Gastrocnemius medialis (tissue), 4 donors: ENCODE measurements at regions of chr1 and their contacts with region 1.

Region 1: DNA sequence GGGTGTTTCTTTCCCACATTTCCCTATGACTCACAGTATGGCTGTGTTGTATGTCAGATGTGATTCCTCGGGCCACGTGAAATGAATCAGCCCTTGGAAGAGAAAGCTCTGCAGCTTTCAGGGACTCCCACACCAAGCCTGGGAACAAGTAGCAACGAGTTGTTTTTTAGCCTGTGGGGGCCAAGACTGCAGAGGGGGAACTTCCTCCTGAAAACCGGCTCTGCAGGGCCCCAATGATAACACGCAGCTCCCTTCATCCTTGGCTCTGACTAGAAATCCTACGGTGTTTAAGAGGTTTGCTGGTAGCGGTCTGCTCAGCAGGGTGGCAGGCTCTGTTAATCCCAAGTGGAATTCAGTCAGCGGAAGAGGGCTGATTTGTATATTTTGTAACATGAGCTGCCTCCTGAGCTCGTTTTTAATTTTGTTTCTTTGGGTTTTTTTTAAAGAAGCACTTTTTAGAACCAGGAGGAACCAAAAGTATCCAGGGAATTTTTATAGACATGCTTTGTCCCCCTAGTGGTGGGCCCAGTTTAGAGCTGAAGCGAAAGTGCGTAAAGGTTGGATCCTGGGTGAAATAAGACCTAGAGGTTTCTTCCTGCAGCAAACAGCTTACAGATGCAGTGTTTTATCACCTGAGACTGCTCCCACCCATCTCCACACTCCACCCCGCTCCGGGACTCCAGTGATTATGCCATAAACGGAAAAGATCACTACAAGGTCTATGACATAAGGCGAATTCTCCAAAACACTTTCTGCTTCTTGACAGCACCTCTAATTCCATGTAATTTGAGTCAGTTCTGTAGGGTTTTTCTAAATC is 48.8 kb downstream of the LAMC2 start:
- DNase-seq: peak; percentile 79 to 83
- ATAC-seq: peak; percentile 97 to 98
- H3K4me3 ChIP-seq: peak overlapping the region; percentile 41 to 53 (median 48)
- H3K27ac ChIP-seq: peak overlapping the region; percentile 73 to 83 (median 78)
- H3K4me1 ChIP-seq: peaks cover 12 to 17% of the 10 kb centered on the region in 2 donors
- H3K27me3 ChIP-seq: no peaks in the 10 kb centered on the region
- CTCF ChIP-seq: peak; percentile 59 to 81 (median 69)
- POLR2A ChIP-seq: peak; percentile 10 to 42

Region 2: DNA sequence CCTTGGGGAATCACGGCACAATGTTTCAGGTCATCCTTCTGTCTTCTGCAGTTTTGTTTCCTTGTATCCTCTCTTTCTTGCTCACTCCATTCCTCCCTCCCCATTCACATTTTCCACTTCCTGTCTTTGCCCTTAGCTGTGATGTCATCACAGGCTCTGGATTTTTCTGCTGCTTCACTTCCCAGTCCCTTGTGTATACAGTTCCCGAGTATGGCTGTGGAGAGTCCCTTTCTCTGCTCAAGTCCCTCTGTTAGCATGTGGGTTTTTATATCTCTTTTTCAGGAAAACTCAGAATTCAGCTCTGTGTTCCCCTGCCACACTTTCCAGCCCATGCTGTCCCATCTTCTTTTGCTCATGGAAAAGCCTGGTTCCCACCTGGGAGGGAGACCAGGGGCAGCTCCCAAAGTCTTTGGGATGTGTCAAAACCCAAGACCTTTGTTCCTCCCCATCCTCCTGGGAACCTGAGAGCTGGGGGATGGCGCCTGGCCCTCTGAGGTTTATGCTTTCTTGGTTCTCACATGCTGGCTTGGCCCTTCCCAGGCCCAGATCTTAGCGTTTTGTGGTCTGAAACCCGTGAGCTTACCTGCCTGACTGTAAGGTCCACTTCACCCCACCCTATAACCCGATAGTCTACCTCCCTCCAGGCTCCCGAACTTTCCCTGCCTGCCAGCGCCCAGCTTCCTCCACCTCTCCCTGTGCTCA is 625.8 kb before region 1 on chr1:
- in situ Hi-C with region 1: no loop called
- intact Hi-C with region 1: no loop called
- DNase-seq: no peak
- ATAC-seq: no peak
- H3K4me3 ChIP-seq: no peak overlapping the region
- H3K27ac ChIP-seq: peak overlapping the region in 3 of 4 donors; percentile 1 to 35 (median 17)
- H3K4me1 ChIP-seq: peaks cover 21% of the 10 kb centered on the region in 2 donors
- H3K27me3 ChIP-seq: no peaks in the 10 kb centered on the region
- CTCF ChIP-seq: no peak
- POLR2A ChIP-seq: no peak

Region 3: DNA sequence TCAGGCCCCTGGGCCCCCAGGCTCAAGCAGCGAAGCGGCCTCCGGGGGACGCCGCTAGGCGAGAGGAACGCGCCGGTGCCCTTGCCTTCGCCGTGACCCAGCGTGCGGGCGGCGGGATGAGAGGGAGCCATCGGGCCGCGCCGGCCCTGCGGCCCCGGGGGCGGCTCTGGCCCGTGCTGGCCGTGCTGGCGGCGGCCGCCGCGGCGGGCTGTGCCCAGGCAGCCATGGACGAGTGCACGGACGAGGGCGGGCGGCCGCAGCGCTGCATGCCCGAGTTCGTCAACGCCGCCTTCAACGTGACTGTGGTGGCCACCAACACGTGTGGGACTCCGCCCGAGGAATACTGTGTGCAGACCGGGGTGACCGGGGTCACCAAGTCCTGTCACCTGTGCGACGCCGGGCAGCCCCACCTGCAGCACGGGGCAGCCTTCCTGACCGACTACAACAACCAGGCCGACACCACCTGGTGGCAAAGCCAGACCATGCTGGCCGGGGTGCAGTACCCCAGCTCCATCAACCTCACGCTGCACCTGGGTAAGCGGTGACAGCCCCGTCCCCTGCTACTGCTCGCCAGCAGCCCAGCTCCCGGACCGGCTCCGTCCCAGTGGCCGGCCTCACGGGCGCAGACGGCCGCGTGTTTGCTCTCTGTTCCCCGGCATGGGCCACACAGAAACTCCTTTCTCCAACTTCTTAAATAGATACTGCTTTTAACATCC is 211.1 kb before region 1 on chr1:
- in situ Hi-C with region 1: no loop called
- intact Hi-C with region 1: loop called (anchors 2 kb)
- DNase-seq: peak; percentile 85
- ATAC-seq: peak; percentile 57 to 61
- H3K4me3 ChIP-seq: peak overlapping the region; percentile 76 to 91 (median 85)
- H3K27ac ChIP-seq: peak overlapping the region; percentile 94 to 100 (median 98)
- H3K4me1 ChIP-seq: peaks cover 48 to 64% of the 10 kb centered on the region in 2 donors
- H3K27me3 ChIP-seq: no peaks in the 10 kb centered on the region
- CTCF ChIP-seq: peak; percentile 62 to 81 (median 78)
- POLR2A ChIP-seq: peak; percentile 46 to 60

Region 4: GRCh38 chr1:183139281-183139942 is 95.5 kb before region 1 on chr1:
- in situ Hi-C with region 1: loop called in 1 of 4 experiments (anchors 10 kb)
- intact Hi-C with region 1: no loop called
- DNase-seq: no peak
- ATAC-seq: peak; percentile 29 to 31
- H3K4me3 ChIP-seq: no peak overlapping the region
- H3K27ac ChIP-seq: peak overlapping the region; percentile 62 to 76 (median 70)
- H3K4me1 ChIP-seq: peaks cover 11 to 18% of the 10 kb centered on the region in 2 donors
- H3K27me3 ChIP-seq: no peaks in the 10 kb centered on the region
- CTCF ChIP-seq: no peak
- POLR2A ChIP-seq: no peak

Region 5: GRCh38 chr1:183148599-183148998 is 86.3 kb before region 1 on chr1:
- in situ Hi-C with region 1: no loop called
- intact Hi-C with region 1: loop called (anchors 5 kb)
- DNase-seq: no peak
- ATAC-seq: peak; percentile 52 to 71
- H3K4me3 ChIP-seq: no peak overlapping the region
- H3K27ac ChIP-seq: peak overlapping the region; percentile 52 to 64 (median 60)
- H3K4me1 ChIP-seq: peaks cover 11 to 14% of the 10 kb centered on the region in 2 donors
- H3K27me3 ChIP-seq: no peaks in the 10 kb centered on the region
- CTCF ChIP-seq: no peak
- POLR2A ChIP-seq: peak in 1 of 2 donors; percentile 9

Region 6: DNA sequence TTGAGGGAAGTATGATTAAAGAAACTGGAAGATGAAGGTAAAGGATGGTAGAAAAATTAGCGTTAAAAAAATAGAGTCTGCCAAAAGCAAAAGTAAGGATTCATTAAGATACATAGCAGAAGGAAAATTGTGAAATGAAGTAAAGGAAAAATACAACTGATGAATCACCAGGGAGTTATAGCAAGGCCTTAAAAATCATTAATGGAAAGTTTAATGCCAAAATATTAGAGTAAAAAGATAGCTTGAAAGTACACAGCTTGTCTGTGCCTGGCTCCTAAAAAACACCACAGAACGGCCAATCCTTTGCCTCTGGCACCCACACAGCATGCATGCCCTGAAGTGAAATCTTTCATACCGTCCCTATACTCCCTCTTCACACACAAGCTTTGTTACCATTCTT is 485.2 kb after region 1 on chr1:
- in situ Hi-C with region 1: no loop called
- intact Hi-C with region 1: no loop called
- DNase-seq: no peak
- ATAC-seq: no peak
- H3K4me3 ChIP-seq: no peak overlapping the region
- H3K27ac ChIP-seq: no peak overlapping the region
- H3K4me1 ChIP-seq: no peaks in the 10 kb centered on the region
- H3K27me3 ChIP-seq: no peaks in the 10 kb centered on the region
- CTCF ChIP-seq: no peak
- POLR2A ChIP-seq: no peak